Colonic mucosa (tissue), 4 donors: ENCODE measurements at regions of chr6 and their contacts with region 1.

Region 1: GRCh38 chr6:161922631-161923119 is 648.8 kb upstream of the AGPAT4 start:
- DNase-seq: peak; percentile 68
- H3K4me3 ChIP-seq: no peak overlapping the region
- H3K27ac ChIP-seq: no peak overlapping the region
- H3K4me1 ChIP-seq: no peaks in the 10 kb centered on the region
- H3K27me3 ChIP-seq: no peaks in the 10 kb centered on the region
- CTCF ChIP-seq: peak; percentile 47

Region 2: DNA sequence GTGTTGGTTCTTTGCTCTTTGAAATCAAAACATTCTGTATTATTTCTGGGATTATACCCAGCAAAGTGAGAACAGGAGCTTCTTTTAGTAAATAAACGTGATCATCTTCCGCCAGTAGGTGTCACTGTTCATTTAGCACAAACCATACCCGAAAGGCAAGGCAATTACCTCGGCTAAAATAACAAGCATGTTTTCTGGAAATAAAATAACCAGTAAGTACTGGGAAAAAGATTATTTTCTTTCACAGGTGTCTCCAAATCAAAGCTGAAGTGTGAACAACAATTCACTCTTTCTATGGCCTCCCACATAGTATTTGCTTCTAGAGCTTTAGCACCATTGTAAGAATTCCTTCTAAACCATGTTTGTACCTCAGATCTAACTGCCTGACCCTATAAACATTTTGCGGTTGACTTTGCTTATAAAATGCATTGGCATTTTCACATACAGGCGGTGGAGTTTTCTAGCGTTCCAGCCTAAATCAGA is 504.2 kb before region 1 on chr6:
- intact Hi-C with region 1: loop called (anchors 10 kb)
- DNase-seq: peak; percentile 53
- H3K4me3 ChIP-seq: no peak overlapping the region
- H3K27ac ChIP-seq: no peak overlapping the region
- H3K4me1 ChIP-seq: no peaks in the 10 kb centered on the region
- H3K27me3 ChIP-seq: no peaks in the 10 kb centered on the region
- CTCF ChIP-seq: peak; percentile 47

Region 3: DNA sequence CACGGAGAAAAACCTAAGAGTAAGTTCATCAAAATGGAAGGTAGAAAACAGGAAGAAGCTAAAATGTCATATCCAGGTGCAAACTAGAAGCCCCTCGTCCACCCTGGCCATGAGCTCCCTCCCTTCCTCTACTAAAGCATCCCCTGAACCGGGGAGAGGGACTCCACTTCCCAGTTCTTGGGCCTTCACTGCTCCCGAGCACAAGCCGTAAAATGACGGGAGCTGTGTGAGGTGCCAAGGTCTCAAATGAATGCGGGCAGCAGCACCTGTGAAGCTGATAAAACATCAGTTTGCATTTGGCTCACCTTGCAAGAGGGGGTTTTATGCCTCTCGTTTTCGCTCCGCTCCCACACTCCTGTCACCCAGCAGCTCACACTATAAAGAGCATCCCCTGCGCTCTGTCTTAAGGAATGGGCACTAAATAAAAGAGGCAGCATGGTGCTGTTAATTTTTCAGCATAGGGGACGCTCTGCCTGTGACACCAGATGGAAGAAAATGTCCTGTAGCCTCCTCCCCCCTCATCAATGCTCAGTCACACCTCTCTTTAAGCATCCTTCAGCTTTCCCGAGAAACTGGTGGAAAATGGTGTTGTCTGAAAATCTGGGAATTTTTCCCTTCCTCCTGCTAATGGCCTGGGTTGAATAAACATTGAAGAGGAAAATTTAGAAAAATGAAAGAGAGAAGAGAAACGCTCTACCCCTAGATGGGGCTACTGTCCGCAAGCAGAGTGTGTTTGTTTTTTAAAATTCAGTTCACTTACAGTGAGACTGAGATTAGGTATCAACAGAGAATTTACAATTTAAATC is 85.8 kb before region 1 on chr6:
- intact Hi-C with region 1: loop called (anchors 5 kb)
- DNase-seq: no peak
- H3K4me3 ChIP-seq: no peak overlapping the region
- H3K27ac ChIP-seq: no peak overlapping the region
- H3K4me1 ChIP-seq: no peaks in the 10 kb centered on the region
- H3K27me3 ChIP-seq: no peaks in the 10 kb centered on the region
- CTCF ChIP-seq: peak; percentile 36

Region 4: GRCh38 chr6:161984713-161985112 is 62.0 kb after region 1 on chr6:
- intact Hi-C with region 1: no loop called
- DNase-seq: no peak
- H3K4me3 ChIP-seq: no peak overlapping the region
- H3K27ac ChIP-seq: no peak overlapping the region
- H3K4me1 ChIP-seq: no peaks in the 10 kb centered on the region
- H3K27me3 ChIP-seq: no peaks in the 10 kb centered on the region
- CTCF ChIP-seq: no peak

Region 5: GRCh38 chr6:162014069-162014811 is 91.6 kb after region 1 on chr6:
- intact Hi-C with region 1: no loop called
- DNase-seq: no peak
- H3K4me3 ChIP-seq: no peak overlapping the region
- H3K27ac ChIP-seq: no peak overlapping the region
- H3K4me1 ChIP-seq: no peaks in the 10 kb centered on the region
- H3K27me3 ChIP-seq: no peaks in the 10 kb centered on the region
- CTCF ChIP-seq: no peak